Dendritic cell treated with granulocyte-macrophage colony-stimulating factor and Interleukin-4, amounts not matched to agents 40 ng/mL and 50 ng/mL, for 4 days (primary cell): ENCODE measurements at regions of chr12 and their contacts with region 1.

Region 1: DNA sequence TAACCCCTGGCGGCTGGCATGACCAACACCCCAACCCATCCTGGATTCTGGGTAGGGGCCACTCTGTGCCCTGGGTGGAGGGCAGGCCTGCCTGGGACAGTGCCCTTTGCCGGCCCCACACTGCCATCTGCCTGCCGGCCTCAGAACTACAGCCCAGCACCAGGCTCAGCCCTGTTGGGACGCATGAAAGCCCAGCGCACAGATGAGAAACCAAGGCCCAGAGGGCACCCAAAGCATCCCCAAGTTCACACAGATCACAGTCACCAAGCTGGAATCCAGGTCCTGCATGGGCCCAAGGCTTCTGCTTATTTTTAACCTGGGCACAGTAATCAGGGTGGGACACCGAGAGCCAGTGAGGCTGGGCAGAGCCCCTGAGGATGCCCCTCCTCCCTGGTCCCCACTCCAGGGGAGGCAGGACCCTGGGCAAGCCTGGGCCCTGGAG is 26.2 kb downstream of the RFLNA start:
- H3K4me3 Mint-ChIP-seq: no peak overlapping the region
- H3K27ac Mint-ChIP-seq: no peak overlapping the region
- H3K4me1 Mint-ChIP-seq: no peaks in the 10 kb centered on the region
- H3K27me3 Mint-ChIP-seq: peaks cover 9% of the 10 kb centered on the region

Region 2: GRCh38 chr12:123983822-123984485 is 337.1 kb before region 1 on chr12:
- intact Hi-C with region 1: no loop called
- H3K4me3 Mint-ChIP-seq: no peak overlapping the region
- H3K27ac Mint-ChIP-seq: peak overlapping the region; percentile 50
- H3K4me1 Mint-ChIP-seq: peaks cover 23% of the 10 kb centered on the region
- H3K27me3 Mint-ChIP-seq: no peaks in the 10 kb centered on the region

Region 3: DNA sequence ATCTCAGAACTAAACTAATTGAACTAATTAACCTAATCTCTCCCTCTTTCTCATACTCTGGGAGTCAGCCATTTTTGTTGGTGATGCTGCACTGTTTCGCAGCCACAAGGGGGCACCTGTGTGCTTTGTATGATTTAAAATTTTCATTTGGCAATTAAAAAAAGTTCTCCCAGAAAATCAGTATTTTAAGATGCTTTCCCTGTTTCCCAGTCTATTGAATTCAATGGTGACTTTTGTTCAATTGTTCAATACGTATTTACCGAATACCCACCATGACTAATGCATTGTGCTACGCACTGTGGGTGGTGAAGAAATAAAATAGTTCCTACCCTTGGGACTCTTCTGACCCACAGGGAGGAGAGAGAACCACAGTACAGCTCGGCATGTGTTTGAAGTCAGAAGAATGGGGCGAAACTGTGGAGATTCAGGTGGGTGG is 284.4 kb before region 1 on chr12:
- intact Hi-C with region 1: loop called (anchors 1 kb)
- H3K4me3 Mint-ChIP-seq: no peak overlapping the region
- H3K27ac Mint-ChIP-seq: no peak overlapping the region
- H3K4me1 Mint-ChIP-seq: peaks cover 10% of the 10 kb centered on the region
- H3K27me3 Mint-ChIP-seq: peaks cover 17% of the 10 kb centered on the region

Region 4: DNA sequence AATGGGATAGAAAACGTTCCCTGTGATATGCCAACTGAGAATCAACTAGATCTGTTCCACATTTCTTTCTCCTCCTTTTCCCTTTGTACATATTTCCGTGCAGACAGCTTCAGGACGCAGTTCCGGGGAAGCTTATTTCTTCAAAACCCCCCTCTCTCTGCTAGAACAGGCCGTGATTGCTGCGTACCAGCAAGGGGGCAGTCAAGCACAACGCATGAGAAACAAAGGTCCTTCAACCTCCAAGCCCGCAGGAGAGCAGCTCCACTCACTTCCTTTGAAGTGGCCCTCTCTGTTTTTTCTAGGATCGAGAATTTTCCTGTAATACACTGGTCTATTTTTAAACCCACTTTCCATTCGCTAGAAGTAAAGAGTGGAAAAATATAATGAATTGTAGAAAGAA is 267.2 kb before region 1 on chr12:
- intact Hi-C with region 1: loop called (anchors 5 kb)
- H3K4me3 Mint-ChIP-seq: no peak overlapping the region
- H3K27ac Mint-ChIP-seq: no peak overlapping the region
- H3K4me1 Mint-ChIP-seq: peaks cover 5% of the 10 kb centered on the region
- H3K27me3 Mint-ChIP-seq: peaks cover 13% of the 10 kb centered on the region

Region 5: GRCh38 chr12:124277394-124278241 is 43.4 kb before region 1 on chr12:
- intact Hi-C with region 1: loop called (anchors 2 kb)
- H3K4me3 Mint-ChIP-seq: no peak overlapping the region
- H3K27ac Mint-ChIP-seq: no peak overlapping the region
- H3K4me1 Mint-ChIP-seq: peaks cover 21% of the 10 kb centered on the region
- H3K27me3 Mint-ChIP-seq: peaks cover 53% of the 10 kb centered on the region

Region 6: GRCh38 chr12:124453419-124454351 is 132.6 kb after region 1 on chr12:
- intact Hi-C with region 1: no loop called
- H3K4me3 Mint-ChIP-seq: peak overlapping the region; percentile 39
- H3K27ac Mint-ChIP-seq: peak overlapping the region; percentile 75
- H3K4me1 Mint-ChIP-seq: peaks cover 69% of the 10 kb centered on the region
- H3K27me3 Mint-ChIP-seq: no peaks in the 10 kb centered on the region